ENCODE measurements at regions of chr7 and their contacts with region 1.

Region 1: GRCh38 chr7:152336754-152337368 is 98.9 kb downstream of the KMT2C start:
- H3K4me3 ChIP-seq: no peak overlapping the region
- H3K27ac ChIP-seq: no peak overlapping the region
- H3K4me1 ChIP-seq: no peaks in the 10 kb centered on the region
- CTCF ChIP-seq: peak; percentile 71; the same call in 1 of the 2 replicates

Region 2: GRCh38 chr7:152313831-152314604 is 22.8 kb before region 1 on chr7:
- CTCF ChIA-PET with region 1: interaction called, 10 read pairs
- POLR2A ChIA-PET with region 1: no interaction called
- H3K4me3 ChIP-seq: no peak overlapping the region
- H3K27ac ChIP-seq: no peak overlapping the region
- H3K4me1 ChIP-seq: peaks cover 6% of the 10 kb centered on the region
- CTCF ChIP-seq: no peak

Region 3: DNA sequence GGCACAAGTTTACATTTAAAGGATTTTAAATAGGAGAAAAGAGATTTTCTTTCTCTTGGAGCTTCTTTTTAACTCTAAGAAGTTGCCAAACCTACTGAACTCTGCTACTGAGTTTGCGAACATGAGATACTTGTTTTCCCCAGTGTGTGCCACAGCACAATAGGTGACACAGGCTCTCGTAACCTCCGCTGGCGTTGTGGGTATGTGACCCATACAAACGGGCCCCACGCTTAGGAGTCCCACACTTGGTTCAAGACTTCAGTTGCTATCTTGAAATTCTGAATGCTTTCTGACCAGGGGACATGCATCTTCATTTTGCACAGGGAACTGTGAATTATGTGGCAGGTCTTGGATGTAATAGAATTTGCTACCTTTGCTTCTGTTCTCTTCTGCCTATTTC is 370.9 kb after region 1 on chr7:
- CTCF ChIA-PET with region 1: interaction called, 25 read pairs
- POLR2A ChIA-PET with region 1: no interaction called
- H3K4me3 ChIP-seq: no peak overlapping the region
- H3K27ac ChIP-seq: no peak overlapping the region
- H3K4me1 ChIP-seq: no peaks in the 10 kb centered on the region
- CTCF ChIP-seq: no peak